ENCODE measurements at regions of chr2 and their contacts with region 1.

Region 1: DNA sequence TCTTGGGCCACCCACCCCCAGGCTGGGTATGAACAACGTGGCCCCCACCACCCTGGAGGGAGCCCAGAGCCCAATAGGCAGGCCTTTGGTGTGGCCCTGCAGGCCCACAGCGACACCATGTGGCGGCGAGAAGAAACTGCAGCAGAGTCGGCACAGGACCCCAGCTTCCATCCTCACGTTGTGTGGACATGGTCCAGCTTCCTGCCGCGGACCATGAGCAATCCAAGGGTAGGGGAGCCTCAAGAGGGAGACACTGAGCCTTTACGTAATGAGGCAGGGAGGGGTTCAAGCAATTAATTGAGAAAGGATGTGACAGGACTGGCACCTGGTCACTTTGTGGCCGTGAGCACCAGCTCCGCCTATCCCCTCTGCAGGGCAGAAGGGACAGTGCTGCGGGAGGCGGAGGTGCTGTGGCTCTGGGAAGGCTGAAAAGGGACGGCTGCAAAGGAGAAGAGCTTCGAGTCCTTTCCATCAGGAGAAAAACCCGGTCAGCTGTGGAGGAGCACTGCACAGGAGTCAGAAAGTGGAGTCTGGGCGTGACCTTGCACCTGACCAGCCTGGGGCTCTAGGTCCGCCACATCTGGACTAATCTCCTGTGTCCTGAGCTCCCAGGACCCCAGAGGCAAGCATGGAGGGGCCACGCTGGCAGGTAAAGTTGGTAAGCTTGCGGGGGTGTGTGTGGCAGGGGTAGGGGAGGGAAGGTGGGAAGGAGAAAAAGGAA is 44.8 kb downstream of the TMEM37 start:
- DNase-seq: peak; percentile 76 to 81
- H3K4me3 ChIP-seq: no peak overlapping the region
- H3K4me3 Mint-ChIP-seq: no peak overlapping the region
- H3K27ac Mint-ChIP-seq: peak overlapping the region; percentile 26
- H3K4me1 ChIP-seq: peaks cover 16% of the 10 kb centered on the region
- H3K4me1 Mint-ChIP-seq: peaks cover 8% of the 10 kb centered on the region
- H3K27me3 ChIP-seq: no peaks in the 10 kb centered on the region
- H3K27me3 Mint-ChIP-seq: no peaks in the 10 kb centered on the region
- CTCF ChIP-seq: peak; percentile 94 to 98

Region 2: DNA sequence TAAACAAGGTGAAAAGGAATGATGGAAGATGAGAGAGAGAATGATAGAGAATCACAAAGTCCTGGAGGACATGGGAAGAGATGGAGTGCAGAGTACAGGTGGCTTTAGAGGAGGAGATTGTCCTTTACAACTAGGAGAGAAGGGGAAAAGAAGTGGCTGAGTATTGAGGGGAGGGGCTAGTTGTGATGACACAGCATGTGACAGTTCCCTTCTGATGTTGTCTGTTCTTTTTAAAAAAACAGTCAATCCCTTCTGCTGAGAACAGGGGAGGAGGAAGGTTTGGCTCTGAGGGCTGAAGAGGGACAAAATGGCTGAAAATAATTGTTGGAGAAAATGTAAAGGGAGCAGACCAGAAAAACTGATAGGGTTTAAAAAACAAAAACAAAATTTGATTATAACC is 208.9 kb before region 1 on chr2:
- CTCF ChIA-PET with region 1: no interaction called
- POLR2A ChIA-PET with region 1: no interaction called
- intact Hi-C with region 1: no loop called
- DNase-seq: no peak
- H3K4me3 ChIP-seq: no peak overlapping the region
- H3K4me3 Mint-ChIP-seq: no peak overlapping the region
- H3K27ac Mint-ChIP-seq: no peak overlapping the region
- H3K4me1 ChIP-seq: no peaks in the 10 kb centered on the region
- H3K4me1 Mint-ChIP-seq: peaks cover 9% of the 10 kb centered on the region
- H3K27me3 ChIP-seq: no peaks in the 10 kb centered on the region
- H3K27me3 Mint-ChIP-seq: no peaks in the 10 kb centered on the region
- CTCF ChIP-seq: no peak

Region 3: GRCh38 chr2:119311356-119311755 is 165.1 kb before region 1 on chr2:
- CTCF ChIA-PET with region 1: interaction called, 3 read pairs
- POLR2A ChIA-PET with region 1: no interaction called
- intact Hi-C with region 1: loop called (anchors 1 kb)
- DNase-seq: peak in 1 of 2 experiments; percentile 33
- H3K4me3 ChIP-seq: no peak overlapping the region
- H3K4me3 Mint-ChIP-seq: no peak overlapping the region
- H3K27ac Mint-ChIP-seq: no peak overlapping the region
- H3K4me1 ChIP-seq: peaks cover 17% of the 10 kb centered on the region; the same call in 1 of the 2 replicates
- H3K4me1 Mint-ChIP-seq: peaks cover 23% of the 10 kb centered on the region
- H3K27me3 ChIP-seq: no peaks in the 10 kb centered on the region
- H3K27me3 Mint-ChIP-seq: no peaks in the 10 kb centered on the region
- CTCF ChIP-seq: peak in 1 of 2 experiments; percentile 37

Region 4: GRCh38 chr2:119431155-119431975 is 45.1 kb before region 1 on chr2 and contains the start of gene TMEM37:
- CTCF ChIA-PET with region 1: interaction called, 12 read pairs
- POLR2A ChIA-PET with region 1: interaction called, 3 read pairs
- intact Hi-C with region 1: no loop called
- DNase-seq: peak; percentile 87 to 90
- H3K4me3 ChIP-seq: peak within 1 kb of the TSS; percentile 63
- H3K4me3 Mint-ChIP-seq: peak within 1 kb of the TSS; percentile 78
- H3K27ac Mint-ChIP-seq: peak within 1 kb of the TSS; percentile 85
- H3K4me1 ChIP-seq: peaks cover 80% of the 10 kb centered on the region
- H3K4me1 Mint-ChIP-seq: peaks cover 53% of the 10 kb centered on the region
- H3K27me3 ChIP-seq: no peaks in the 10 kb centered on the region
- H3K27me3 Mint-ChIP-seq: no peaks in the 10 kb centered on the region
- CTCF ChIP-seq: no peak
- total RNA-seq, gene TMEM37: 13.8 and 15.8 TPM in 2 replicates

Region 5: GRCh38 chr2:119441376-119442225 is 34.9 kb before region 1 on chr2:
- CTCF ChIA-PET with region 1: no interaction called
- POLR2A ChIA-PET with region 1: no interaction called
- intact Hi-C with region 1: no loop called
- DNase-seq: no peak
- H3K4me3 ChIP-seq: no peak overlapping the region
- H3K4me3 Mint-ChIP-seq: no peak overlapping the region
- H3K27ac Mint-ChIP-seq: no peak overlapping the region
- H3K4me1 ChIP-seq: peaks cover 16% of the 10 kb centered on the region
- H3K4me1 Mint-ChIP-seq: peaks cover 10% of the 10 kb centered on the region
- H3K27me3 ChIP-seq: no peaks in the 10 kb centered on the region
- H3K27me3 Mint-ChIP-seq: no peaks in the 10 kb centered on the region
- CTCF ChIP-seq: no peak

Region 6: GRCh38 chr2:119491808-119492533 is 15.5 kb after region 1 on chr2:
- CTCF ChIA-PET with region 1: interaction called, 18 read pairs
- POLR2A ChIA-PET with region 1: no interaction called
- intact Hi-C with region 1: no loop called
- DNase-seq: peak; percentile 86 to 92
- H3K4me3 ChIP-seq: no peak overlapping the region
- H3K4me3 Mint-ChIP-seq: peak overlapping the region; percentile 39
- H3K27ac Mint-ChIP-seq: peak overlapping the region; percentile 96
- H3K4me1 ChIP-seq: peaks cover 60% of the 10 kb centered on the region
- H3K4me1 Mint-ChIP-seq: peaks cover 53% of the 10 kb centered on the region
- H3K27me3 ChIP-seq: no peaks in the 10 kb centered on the region
- H3K27me3 Mint-ChIP-seq: no peaks in the 10 kb centered on the region
- CTCF ChIP-seq: no peak

Region 7: DNA sequence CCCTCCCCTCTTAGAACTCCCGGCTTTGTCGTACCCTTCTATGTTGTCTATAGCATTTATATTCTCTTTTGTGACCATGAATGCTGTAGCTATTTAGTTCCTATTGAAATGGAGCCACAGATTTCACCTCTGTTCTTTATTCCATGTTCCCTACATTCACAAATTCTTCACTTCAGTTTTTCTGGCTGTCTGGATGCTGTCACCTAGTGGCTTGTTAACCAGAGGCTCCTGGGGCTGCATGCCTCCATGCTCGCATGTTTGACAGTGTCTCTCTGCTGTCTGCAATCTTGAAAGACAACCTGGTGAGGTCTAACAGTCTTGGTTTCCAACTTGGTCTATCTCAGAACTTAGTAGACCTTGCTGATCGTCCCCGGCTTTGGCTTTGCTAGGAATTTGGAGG is 116.0 kb after region 1 on chr2:
- CTCF ChIA-PET with region 1: no interaction called
- POLR2A ChIA-PET with region 1: no interaction called
- intact Hi-C with region 1: loop called (anchors 1 kb)
- DNase-seq: peak in 1 of 2 experiments; percentile 17
- H3K4me3 ChIP-seq: no peak overlapping the region
- H3K4me3 Mint-ChIP-seq: no peak overlapping the region
- H3K27ac Mint-ChIP-seq: no peak overlapping the region
- H3K4me1 ChIP-seq: no peaks in the 10 kb centered on the region
- H3K4me1 Mint-ChIP-seq: no peaks in the 10 kb centered on the region
- H3K27me3 ChIP-seq: no peaks in the 10 kb centered on the region; the same call in none of the 2 replicates
- H3K27me3 Mint-ChIP-seq: peaks cover 9% of the 10 kb centered on the region
- CTCF ChIP-seq: peak in 1 of 2 experiments; percentile 59